CD8-positive, alpha-beta T cell (primary cell): ENCODE measurements at regions of chr7 and their contacts with region 1.

Region 1: DNA sequence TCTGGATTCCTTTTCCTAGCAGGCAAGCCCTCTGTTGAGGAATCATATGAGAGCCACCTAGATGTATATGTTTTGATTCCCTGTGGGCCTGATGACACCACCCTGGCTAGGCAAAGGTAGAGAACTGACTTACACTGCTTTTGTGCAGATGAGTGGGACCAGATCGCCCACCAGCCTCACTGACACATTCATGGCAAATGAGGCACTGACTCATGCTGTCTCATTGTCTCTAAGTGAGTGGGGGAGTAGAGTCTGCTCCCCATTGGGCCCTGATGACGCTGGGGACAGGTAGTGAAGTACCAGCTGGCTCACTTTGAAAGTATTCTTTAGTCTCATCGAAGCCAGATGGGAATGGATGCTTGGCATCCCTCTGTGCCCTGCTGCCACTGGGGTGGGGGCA is 326.3 kb downstream of the ABCA13 start:
- DNase-seq: no peak
- ATAC-seq: no peak
- H3K4me3 ChIP-seq: no peak overlapping the region
- H3K4me3 Mint-ChIP-seq: no peak overlapping the region
- H3K27ac ChIP-seq: no peak overlapping the region
- H3K27ac Mint-ChIP-seq: no peak overlapping the region
- H3K4me1 ChIP-seq: no peaks in the 10 kb centered on the region
- H3K4me1 Mint-ChIP-seq: no peaks in the 10 kb centered on the region
- H3K27me3 ChIP-seq: no peaks in the 10 kb centered on the region
- H3K27me3 Mint-ChIP-seq: no peaks in the 10 kb centered on the region
- CTCF ChIP-seq: no peak

Region 2: GRCh38 chr7:46879783-46880182 is 1617.7 kb before region 1 on chr7:
- CTCF ChIA-PET with region 1: no interaction called
- POLR2A ChIA-PET with region 1: no interaction called
- intact Hi-C with region 1: loop called in 1 of 2 experiments (anchors 5 kb)
- DNase-seq: no peak
- ATAC-seq: no peak
- H3K4me3 ChIP-seq: no peak overlapping the region
- H3K4me3 Mint-ChIP-seq: no peak overlapping the region
- H3K27ac ChIP-seq: no peak overlapping the region
- H3K27ac Mint-ChIP-seq: no peak overlapping the region
- H3K4me1 ChIP-seq: no peaks in the 10 kb centered on the region
- H3K4me1 Mint-ChIP-seq: no peaks in the 10 kb centered on the region
- H3K27me3 ChIP-seq: no peaks in the 10 kb centered on the region
- H3K27me3 Mint-ChIP-seq: no peaks in the 10 kb centered on the region
- CTCF ChIP-seq: no peak

Region 3: DNA sequence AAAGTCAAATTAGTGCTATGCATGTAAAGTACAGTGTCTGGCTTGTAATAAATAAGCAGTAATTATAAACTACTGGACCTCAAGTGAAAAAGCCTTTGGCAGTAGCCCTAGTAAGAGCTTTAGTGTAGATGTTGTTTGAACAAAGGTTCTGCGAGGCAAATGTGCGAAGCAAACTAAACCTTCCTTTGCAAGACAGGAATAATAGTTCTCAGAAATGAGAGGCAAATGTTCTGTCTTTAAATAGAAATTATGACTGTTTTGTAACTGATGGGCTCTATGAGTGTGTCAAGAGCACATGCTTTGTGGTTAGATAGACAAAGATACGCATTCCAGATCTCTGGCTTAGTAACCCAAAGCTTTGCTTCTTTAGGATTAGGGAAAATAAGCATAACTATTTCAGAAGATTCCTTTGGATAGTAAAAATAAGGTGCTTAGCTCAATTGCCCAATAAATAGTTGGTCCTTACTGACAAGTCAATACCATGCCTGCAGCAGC is 257.6 kb after region 1 on chr7:
- CTCF ChIA-PET with region 1: no interaction called
- POLR2A ChIA-PET with region 1: no interaction called
- intact Hi-C with region 1: no loop called
- DNase-seq: no peak
- ATAC-seq: no peak
- H3K4me3 ChIP-seq: no peak overlapping the region
- H3K4me3 Mint-ChIP-seq: no peak overlapping the region
- H3K27ac ChIP-seq: no peak overlapping the region
- H3K27ac Mint-ChIP-seq: no peak overlapping the region
- H3K4me1 ChIP-seq: no peaks in the 10 kb centered on the region
- H3K4me1 Mint-ChIP-seq: no peaks in the 10 kb centered on the region
- H3K27me3 ChIP-seq: no peaks in the 10 kb centered on the region
- H3K27me3 Mint-ChIP-seq: no peaks in the 10 kb centered on the region
- CTCF ChIP-seq: no peak